ENCODE measurements at regions of chr5 and their contacts with region 1.

Region 1: GRCh38 chr5:175837171-175837699 is 34.1 kb upstream of the CPLX2 start:
- DNase-seq: no peak

Region 2: GRCh38 chr5:175798626-175799025 is 38.6 kb before region 1 on chr5:
- intact Hi-C with region 1: loop called in 1 of 2 experiments (anchors 1 kb)
- DNase-seq: no peak

Measured in posterior vena cava (tissue), 2 donors.